PC-9 (cell line): ENCODE measurements at regions of chr1 and their contacts with region 1.

Region 1: DNA sequence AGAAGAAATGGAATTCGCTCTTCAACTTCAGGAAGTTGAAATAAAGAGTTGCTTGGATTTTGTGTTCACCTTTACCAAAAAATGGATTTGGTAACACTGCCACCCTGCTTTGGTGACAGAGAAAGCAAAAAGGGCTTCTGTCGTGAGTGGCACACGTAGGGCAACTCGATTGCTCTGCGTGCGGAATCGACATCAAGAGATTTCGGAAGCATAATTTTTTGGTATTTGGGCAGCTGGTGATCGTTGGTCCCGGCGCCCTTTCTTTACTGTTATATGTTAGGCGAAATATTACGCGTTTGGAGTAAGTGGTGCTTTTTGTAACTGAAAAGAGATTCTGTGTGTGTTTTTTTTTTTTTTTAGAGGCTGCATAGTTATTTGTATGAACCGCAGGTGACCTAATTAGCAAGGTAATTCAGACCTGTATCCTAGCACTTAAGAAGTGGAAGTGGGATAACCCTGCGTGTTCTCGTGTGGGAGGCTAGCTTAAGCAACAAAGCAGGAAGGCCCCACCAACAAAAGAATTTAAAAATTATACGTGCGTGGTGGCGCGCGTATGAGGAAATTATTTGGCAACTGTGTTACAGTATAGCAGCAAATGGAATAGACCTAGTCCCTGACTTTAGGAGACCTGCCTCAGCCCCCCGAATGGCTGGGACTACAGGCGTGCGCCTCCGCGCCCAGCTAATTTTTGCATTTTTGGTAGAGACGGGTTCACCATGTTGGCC is at the start of gene RNU11:
- DNase-seq: peak; percentile 85 to 95
- H3K4me3 ChIP-seq: peak within 1 kb of the TSS; percentile 52; the same call in 1 of the 2 replicates
- H3K27ac ChIP-seq: peak within 1 kb of the TSS; percentile 96
- H3K4me1 ChIP-seq: peaks cover 24% of the 10 kb centered on the region
- H3K27me3 ChIP-seq: no peaks in the 10 kb centered on the region
- CTCF ChIP-seq: no peak
- total RNA-seq, gene RNU11: not detected in 2 replicates

Region 2: DNA sequence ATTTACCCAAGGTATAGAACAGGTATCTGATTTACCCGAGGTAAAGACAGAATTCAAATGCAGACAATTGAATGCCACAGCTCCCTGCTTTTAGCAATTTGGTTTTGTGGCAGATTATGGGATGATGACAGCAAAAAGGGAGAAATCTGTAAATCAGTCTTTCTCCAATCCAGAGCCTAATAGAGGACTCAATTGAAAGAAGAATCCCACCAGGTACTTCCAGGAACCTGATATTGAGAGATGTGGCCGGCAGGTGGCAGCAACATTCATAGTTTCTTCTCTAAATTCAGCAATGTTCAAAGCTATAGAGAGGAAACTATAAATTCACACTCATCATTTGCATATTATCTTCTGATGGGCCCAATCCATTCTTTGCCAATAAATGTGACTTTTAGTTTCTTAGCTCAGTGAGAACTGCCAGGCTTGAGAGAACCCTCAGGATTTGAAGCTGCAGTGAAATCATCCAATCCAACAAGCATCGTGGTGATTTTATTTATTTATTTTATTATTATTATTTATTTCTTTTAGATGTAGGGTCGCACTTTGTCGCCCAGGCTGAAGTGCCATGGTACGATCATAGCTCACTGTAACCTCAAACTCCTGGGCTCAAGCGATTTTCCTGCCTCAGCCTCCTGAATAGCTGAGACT is 288.9 kb before region 1 on chr1:
- CTCF ChIA-PET with region 1: interaction called, 3 read pairs
- POLR2A ChIA-PET with region 1: interaction called, 11 read pairs
- intact Hi-C with region 1: no loop called
- DNase-seq: peak; percentile 35 to 62
- H3K4me3 ChIP-seq: no peak overlapping the region
- H3K27ac ChIP-seq: no peak overlapping the region
- H3K4me1 ChIP-seq: peaks cover 4% of the 10 kb centered on the region; the same call in 1 of the 2 replicates
- H3K27me3 ChIP-seq: no peaks in the 10 kb centered on the region
- CTCF ChIP-seq: peak; percentile 73

Region 3: DNA sequence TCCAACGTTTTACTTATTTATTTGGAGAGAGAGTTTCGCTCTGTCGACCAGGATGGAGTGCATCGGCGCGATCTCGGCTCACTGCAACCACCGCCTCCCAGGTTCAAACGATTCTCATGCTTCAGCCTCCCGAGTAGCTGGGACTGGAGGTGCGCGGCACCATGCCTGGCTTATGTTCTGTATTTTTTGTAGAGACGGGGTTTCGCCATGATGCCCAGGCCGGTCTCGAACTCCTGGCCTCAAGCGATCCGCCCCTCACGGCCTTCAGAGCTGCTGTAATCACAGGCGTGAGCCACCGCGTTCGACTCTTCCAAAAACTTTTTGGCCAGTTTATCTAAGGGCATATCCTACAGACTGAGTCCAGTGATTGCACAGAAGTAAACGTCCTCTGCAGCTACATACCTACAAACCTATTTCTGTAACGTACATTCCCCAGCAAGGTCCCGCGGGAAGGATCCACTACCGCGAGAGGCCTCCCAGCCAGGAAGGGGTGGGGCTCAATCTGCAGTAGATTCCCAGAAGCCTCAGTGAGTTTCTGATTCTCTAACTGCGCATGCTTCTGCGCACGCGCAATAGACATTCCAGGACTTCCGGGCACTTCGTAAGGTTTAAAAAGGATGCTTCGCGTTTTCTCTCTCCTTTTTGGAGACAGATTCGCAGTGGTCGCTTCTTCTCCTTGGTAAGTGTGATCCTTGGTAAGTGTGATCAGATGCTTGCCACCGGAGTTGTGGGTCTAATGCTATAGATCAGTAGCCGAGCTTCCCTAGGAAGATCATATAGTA is 143.0 kb before region 1 on chr1 and contains the start of gene RCC1:
- CTCF ChIA-PET with region 1: no interaction called
- POLR2A ChIA-PET with region 1: no interaction called
- intact Hi-C with region 1: loop called (anchors 5 kb)
- DNase-seq: peak; percentile 92 to 95
- H3K4me3 ChIP-seq: peak within 1 kb of the TSS; percentile 83
- H3K27ac ChIP-seq: peak within 1 kb of the TSS; percentile 99
- H3K4me1 ChIP-seq: peaks cover 38% of the 10 kb centered on the region
- H3K27me3 ChIP-seq: 0 out of 2 replicates have a peak, but pooled peaks cover 3% of the 10 kb centered on the region
- CTCF ChIP-seq: no peak
- total RNA-seq, gene RCC1: 134 and 156 TPM in 2 replicates

Region 4: DNA sequence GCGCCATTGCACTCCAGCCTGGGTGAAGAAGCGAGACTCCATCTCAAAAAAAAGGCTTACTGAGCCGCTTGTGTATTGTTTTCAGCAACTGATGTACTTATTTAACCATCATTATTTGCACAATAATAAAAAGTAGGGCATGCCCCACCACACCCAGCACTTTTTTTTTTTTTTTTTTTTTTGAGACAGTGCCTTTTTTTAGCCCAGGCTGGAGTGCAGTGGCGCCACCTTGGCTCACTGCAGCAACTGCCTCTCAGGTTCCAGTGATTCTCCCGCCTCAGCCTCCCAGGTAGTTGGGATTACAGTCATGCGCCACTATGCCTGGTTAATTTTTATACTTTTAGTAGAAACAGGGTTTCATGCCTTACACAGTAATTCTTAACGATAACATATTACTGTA is 108.0 kb before region 1 on chr1:
- CTCF ChIA-PET with region 1: no interaction called
- POLR2A ChIA-PET with region 1: interaction called, 12 read pairs
- intact Hi-C with region 1: no loop called
- DNase-seq: no peak
- H3K4me3 ChIP-seq: no peak overlapping the region
- H3K27ac ChIP-seq: no peak overlapping the region
- H3K4me1 ChIP-seq: no peaks in the 10 kb centered on the region
- H3K27me3 ChIP-seq: no peaks in the 10 kb centered on the region
- CTCF ChIP-seq: no peak

Region 5: DNA sequence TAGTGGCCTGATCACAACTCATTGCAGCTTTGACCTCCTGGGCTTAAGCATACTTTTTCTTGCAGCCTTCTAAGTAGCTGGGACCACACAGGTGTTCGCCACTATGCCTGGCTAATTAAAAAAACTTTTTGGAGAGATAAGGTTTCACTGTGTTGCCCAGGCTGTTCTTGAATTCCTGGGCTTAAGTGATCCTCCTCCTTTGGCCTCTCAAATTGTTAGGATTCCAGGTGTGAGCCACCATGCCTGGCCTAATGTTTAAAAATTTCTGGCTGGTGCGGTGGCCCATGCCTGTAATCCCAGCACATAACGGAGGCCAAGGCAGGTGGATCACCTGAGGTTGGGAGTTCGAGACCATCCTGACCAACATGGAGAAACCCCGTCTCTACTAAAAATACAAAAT is 112.6 kb after region 1 on chr1:
- CTCF ChIA-PET with region 1: no interaction called
- POLR2A ChIA-PET with region 1: interaction called, 35 read pairs
- intact Hi-C with region 1: no loop called
- DNase-seq: no peak
- H3K4me3 ChIP-seq: no peak overlapping the region
- H3K27ac ChIP-seq: no peak overlapping the region
- H3K4me1 ChIP-seq: no peaks in the 10 kb centered on the region
- H3K27me3 ChIP-seq: no peaks in the 10 kb centered on the region
- CTCF ChIP-seq: no peak